ENCODE measurements at regions of chrX and their contacts with region 1.

Region 1: GRCh38 chrX:40647307-40648197 is at the start of gene CXorf38:
- DNase-seq: peak; percentile 92
- H3K4me3 Mint-ChIP-seq: peak within 1 kb of the TSS; percentile 96
- H3K27ac Mint-ChIP-seq: peak within 1 kb of the TSS; percentile 93
- H3K4me1 Mint-ChIP-seq: peaks cover 19% of the 10 kb centered on the region
- H3K27me3 Mint-ChIP-seq: no peaks in the 10 kb centered on the region
- total RNA-seq, gene CXorf38: 22.8 to 23.2 TPM

Region 2: GRCh38 chrX:40539214-40540142 is 108.1 kb before region 1 on chrX:
- CTCF ChIA-PET with region 1: interaction called, 14 read pairs
- POLR2A ChIA-PET with region 1: no interaction called
- DNase-seq: peak; percentile 78
- H3K4me3 Mint-ChIP-seq: no peak overlapping the region
- H3K27ac Mint-ChIP-seq: no peak overlapping the region
- H3K4me1 Mint-ChIP-seq: peaks cover 23% of the 10 kb centered on the region
- H3K27me3 Mint-ChIP-seq: peaks cover 23% of the 10 kb centered on the region

Region 3: DNA sequence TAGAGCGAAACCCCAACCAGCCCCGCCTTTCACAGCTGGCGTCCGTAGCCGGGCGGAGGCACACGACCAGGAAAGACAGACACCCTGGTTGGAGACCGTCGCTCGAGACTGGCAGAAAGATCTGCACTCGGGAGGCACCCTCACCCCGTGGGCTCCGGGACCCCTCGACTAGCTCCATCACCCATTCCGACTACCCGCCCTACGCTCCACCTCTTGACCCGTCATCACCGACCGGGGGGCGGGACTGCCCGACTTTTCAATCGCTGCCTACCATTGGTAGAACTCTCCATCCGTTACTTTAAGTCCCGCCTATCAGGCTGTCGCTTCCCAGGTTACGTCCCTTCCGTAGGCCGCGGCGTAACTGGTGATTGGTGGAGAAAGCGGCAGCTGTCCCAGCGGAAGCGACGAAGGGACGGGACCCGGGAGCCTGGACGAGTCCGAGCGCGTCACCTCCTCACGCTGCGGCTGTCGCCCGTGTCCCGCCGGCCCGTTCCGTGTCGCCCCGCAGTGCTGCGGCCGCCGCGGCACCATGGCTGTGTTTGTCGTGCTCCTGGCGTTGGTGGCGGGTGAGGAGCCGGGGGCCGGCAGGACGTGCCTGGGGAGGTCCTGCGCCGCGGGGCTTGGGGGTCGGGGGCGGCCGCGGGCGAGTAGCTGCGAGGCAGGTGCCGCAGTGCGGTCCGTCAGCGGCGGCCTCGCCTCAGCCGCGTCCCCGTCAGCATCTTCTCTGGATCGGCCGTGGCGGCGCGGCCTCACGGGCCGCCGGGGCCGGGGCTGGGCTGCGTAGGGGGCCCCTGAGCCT is 66.8 kb before region 1 on chrX and contains the start of gene ATP6AP2:
- CTCF ChIA-PET with region 1: no interaction called
- POLR2A ChIA-PET with region 1: interaction called, 14 read pairs
- DNase-seq: peak; percentile 92
- H3K4me3 Mint-ChIP-seq: peak within 1 kb of the TSS; percentile 82
- H3K27ac Mint-ChIP-seq: peak within 1 kb of the TSS; percentile 88
- H3K4me1 Mint-ChIP-seq: peaks cover 27% of the 10 kb centered on the region
- H3K27me3 Mint-ChIP-seq: no peaks in the 10 kb centered on the region
- total RNA-seq, gene ATP6AP2: 72.9 to 77.8 TPM

Region 4: GRCh38 chrX:40755291-40756249 is 108.0 kb after region 1 on chrX:
- CTCF ChIA-PET with region 1: no interaction called
- POLR2A ChIA-PET with region 1: no interaction called
- DNase-seq: no peak
- H3K4me3 Mint-ChIP-seq: no peak overlapping the region
- H3K27ac Mint-ChIP-seq: no peak overlapping the region
- H3K4me1 Mint-ChIP-seq: no peaks in the 10 kb centered on the region
- H3K27me3 Mint-ChIP-seq: peaks cover 5% of the 10 kb centered on the region

Region 5: GRCh38 chrX:40792433-40792832 is 144.9 kb after region 1 on chrX:
- CTCF ChIA-PET with region 1: interaction called, 42 read pairs
- POLR2A ChIA-PET with region 1: no interaction called
- DNase-seq: no peak
- H3K4me3 Mint-ChIP-seq: no peak overlapping the region
- H3K27ac Mint-ChIP-seq: no peak overlapping the region
- H3K4me1 Mint-ChIP-seq: no peaks in the 10 kb centered on the region
- H3K27me3 Mint-ChIP-seq: peaks cover 6% of the 10 kb centered on the region

Region 6: DNA sequence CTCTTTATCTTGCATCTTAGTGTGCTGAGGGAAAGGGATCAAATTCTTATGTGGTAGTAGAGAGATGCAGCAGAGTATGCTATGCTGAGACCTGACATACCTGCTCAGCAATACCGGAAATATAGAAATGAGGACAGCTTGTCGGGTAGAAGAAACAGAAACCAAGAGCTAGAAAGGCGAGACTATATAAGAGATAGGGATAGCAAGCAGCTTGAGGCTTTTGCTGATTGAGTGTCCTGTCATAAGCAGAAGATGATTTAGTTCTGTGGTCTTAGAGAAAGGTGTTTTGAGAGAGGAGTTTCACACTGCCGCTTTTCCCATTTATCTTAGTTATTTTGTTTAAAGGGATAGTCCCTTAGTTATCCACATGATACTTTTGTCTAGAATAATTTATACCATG is 469.4 kb after region 1 on chrX:
- CTCF ChIA-PET with region 1: interaction called, 23 read pairs
- POLR2A ChIA-PET with region 1: no interaction called
- DNase-seq: no peak
- H3K4me3 Mint-ChIP-seq: peak overlapping the region; percentile 66
- H3K27ac Mint-ChIP-seq: peak overlapping the region; percentile 72
- H3K4me1 Mint-ChIP-seq: peaks cover 66% of the 10 kb centered on the region
- H3K27me3 Mint-ChIP-seq: no peaks in the 10 kb centered on the region